Activated CD8-positive, alpha-beta T cell treated with anti-CD3 and anti-CD28 coated beads for 36 hours (primary cell): ENCODE measurements at regions of chr1 and their contacts with region 1.

Region 1: GRCh38 chr1:205227584-205228006 is at the start of gene TMCC2:
- DNase-seq: peak; percentile 93
- ATAC-seq: peak; percentile 87
- H3K4me3 Mint-ChIP-seq: peak within 1 kb of the TSS; percentile 89
- H3K27ac Mint-ChIP-seq: peak within 1 kb of the TSS; percentile 93
- H3K4me1 Mint-ChIP-seq: peaks cover 42% of the 10 kb centered on the region
- H3K27me3 Mint-ChIP-seq: peaks cover 19% of the 10 kb centered on the region
- CTCF ChIP-seq: no peak
- total RNA-seq, gene TMCC2: 6.6 to 7.1 TPM

Region 2: DNA sequence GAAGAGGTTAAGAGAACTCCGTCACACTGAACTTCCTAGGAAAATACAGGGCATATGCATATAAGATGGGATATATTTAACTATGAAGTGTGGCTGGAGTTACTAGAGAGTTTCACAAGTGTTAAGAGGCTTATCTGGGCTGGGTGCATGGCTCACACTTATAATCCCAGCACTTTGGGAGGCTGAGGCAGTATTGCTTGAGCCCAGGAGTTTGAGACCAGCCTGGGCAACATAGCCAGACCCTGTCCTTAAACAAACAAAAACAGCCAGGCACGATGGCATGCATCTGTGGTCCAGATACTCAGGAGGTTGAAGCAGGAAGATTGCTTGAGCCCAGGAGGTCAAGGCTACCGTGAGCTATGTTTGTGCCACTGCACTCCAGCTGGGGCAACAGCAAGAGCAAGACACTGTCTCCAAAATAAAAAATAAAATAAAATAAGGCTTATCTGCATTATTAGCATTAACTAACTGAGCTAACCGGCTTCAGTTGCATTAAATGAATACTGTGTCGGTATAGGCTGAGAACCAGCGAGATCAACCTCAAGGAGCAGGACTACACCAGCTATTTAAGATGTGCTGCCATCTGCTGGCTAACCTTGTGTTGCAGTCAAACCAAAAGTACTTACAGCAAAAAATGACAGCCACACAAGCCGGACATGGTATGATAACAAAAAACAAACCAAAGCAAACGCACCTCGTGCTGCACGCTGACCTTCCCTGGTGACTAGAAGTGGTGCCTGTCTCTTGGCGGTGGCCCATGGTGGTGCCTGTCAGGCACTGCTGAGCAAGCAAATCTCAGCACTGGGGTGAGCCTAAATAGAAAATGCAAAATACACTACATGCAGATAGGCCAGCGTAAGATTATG is 86.1 kb before region 1 on chr1:
- CTCF ChIA-PET with region 1: interaction called, 10 read pairs
- POLR2A ChIA-PET with region 1: interaction called, 3 read pairs
- intact Hi-C with region 1: no loop called
- DNase-seq: peak; percentile 92
- ATAC-seq: peak; percentile 94
- H3K4me3 Mint-ChIP-seq: no peak overlapping the region
- H3K27ac Mint-ChIP-seq: no peak overlapping the region
- H3K4me1 Mint-ChIP-seq: peaks cover 5% of the 10 kb centered on the region
- H3K27me3 Mint-ChIP-seq: no peaks in the 10 kb centered on the region
- CTCF ChIP-seq: peak; percentile 79

Region 3: DNA sequence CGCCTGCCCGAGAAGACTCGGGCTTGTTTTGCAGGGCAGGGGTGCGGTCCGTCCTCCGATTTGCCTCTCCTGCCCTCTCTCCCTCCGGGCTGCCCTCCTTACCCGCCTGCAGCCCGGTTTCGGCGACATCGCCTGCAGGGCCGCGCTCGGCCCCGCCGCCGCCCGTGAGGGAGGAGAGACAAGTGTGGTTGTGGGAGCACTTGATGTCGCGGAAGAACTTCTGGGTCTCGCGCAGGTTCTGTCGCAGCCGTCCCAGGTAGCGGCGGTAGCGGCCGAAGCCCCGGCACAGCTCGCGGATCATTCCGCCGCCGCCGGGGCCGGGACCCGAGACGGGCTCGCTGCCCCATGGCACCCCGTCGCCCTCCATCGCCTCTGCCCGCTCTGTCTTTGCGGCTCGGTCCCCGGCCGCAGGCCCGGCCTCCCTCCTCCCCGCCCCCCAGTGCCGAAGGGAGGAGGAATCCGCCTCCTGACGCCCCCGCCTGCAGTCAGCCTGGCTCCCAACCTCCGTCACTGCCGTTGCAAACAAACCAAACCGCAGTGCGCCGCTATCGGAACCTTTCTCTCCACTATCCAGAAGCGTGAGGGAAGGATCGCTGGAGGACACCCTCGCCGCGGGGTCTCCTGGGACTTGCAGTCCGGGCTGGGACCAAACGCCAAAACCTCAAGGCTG is 16.3 kb before region 1 on chr1 and contains the start of gene DSTYK:
- CTCF ChIA-PET with region 1: interaction called, 6 read pairs
- POLR2A ChIA-PET with region 1: interaction called, 8 read pairs
- intact Hi-C with region 1: loop called (anchors 2 kb)
- DNase-seq: peak; percentile 95
- ATAC-seq: peak; percentile 91
- H3K4me3 Mint-ChIP-seq: peak within 1 kb of the TSS; percentile 90
- H3K27ac Mint-ChIP-seq: peak within 1 kb of the TSS; percentile 86
- H3K4me1 Mint-ChIP-seq: peaks cover 42% of the 10 kb centered on the region
- H3K27me3 Mint-ChIP-seq: no peaks in the 10 kb centered on the region
- CTCF ChIP-seq: no peak
- total RNA-seq, gene DSTYK: 10.0 to 10.7 TPM

Region 4: DNA sequence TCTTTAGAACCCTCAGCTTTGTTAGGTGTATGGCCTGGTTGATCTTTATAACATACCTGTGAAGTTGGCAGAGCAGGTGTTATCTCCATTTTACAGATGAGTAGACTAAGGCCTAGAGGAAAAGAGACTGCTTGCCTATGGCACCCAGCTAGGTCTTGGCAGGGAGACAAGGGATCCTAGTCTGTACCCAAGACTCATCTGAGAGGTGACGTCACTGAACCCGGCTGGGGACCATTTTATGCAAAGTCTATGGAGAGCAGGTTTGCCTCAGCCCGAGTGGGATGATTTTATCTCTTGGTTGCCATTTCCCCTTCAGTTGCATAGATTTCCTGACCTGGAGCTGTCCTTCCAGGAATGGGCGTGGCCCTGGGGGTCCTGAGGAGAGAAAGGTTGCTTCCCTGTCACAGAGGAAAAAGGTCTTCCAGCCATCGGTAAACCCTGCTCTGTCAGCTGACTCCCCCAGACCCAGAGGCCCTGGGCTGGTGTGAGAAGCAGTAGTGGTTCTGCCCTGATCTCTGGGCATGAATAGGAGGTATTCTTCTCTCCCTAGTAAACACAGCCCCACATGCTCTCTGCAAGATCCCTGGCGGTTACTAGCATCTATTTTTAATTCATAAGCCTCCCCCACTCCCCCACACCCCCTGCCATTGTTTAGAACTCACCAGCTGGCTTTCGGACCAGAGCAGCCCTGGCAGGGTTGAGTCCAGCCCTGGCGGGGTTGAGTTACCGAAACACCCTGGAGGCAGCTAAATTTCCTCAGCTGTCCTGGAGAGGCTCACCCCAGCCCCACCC is 19.7 kb after region 1 on chr1:
- CTCF ChIA-PET with region 1: interaction called, 411 read pairs
- POLR2A ChIA-PET with region 1: interaction called, 12 read pairs
- intact Hi-C with region 1: no loop called
- DNase-seq: peak; percentile 37
- ATAC-seq: peak; percentile 48
- H3K4me3 Mint-ChIP-seq: no peak overlapping the region
- H3K27ac Mint-ChIP-seq: no peak overlapping the region
- H3K4me1 Mint-ChIP-seq: peaks cover 6% of the 10 kb centered on the region
- H3K27me3 Mint-ChIP-seq: no peaks in the 10 kb centered on the region
- CTCF ChIP-seq: no peak

Region 5: GRCh38 chr1:205321164-205321958 is 93.8 kb after region 1 on chr1 and contains the start of gene NUAK2:
- CTCF ChIA-PET with region 1: interaction called, 21 read pairs
- POLR2A ChIA-PET with region 1: interaction called, 4 read pairs
- intact Hi-C with region 1: no loop called
- DNase-seq: peak; percentile 85
- ATAC-seq: peak; percentile 76
- H3K4me3 Mint-ChIP-seq: peak within 1 kb of the TSS; percentile 78
- H3K27ac Mint-ChIP-seq: peak within 1 kb of the TSS; percentile 82
- H3K4me1 Mint-ChIP-seq: peaks cover 56% of the 10 kb centered on the region
- H3K27me3 Mint-ChIP-seq: no peaks in the 10 kb centered on the region
- CTCF ChIP-seq: peak; percentile 34
- total RNA-seq, gene NUAK2: 1.9 TPM